ENCODE measurements at regions of chr2 and their contacts with region 1.

Region 1: DNA sequence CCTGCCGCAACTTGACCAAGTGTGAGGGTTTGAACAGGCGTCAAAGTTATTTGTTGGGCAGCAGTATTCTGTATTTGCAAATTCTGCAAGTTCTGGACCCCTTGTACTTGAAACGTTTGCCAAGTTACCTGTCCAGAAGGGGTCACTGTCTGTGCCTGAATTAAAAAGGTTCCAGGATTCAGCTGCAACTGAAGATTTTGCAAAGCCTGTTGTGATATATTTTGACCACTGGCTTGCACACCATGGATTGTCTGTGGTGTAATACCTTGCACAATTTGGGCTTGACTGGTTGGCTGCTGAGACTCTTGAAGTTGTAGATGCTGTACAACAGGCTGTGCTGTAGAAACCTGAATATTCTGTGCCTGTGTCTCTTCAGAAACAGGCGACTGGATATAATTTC is 10.2 kb downstream of the SP3 start:
- DNase-seq: no peak
- ATAC-seq: no peak
- H3K4me3 ChIP-seq: no peak overlapping the region
- H3K4me3 Mint-ChIP-seq: no peak overlapping the region
- H3K27ac ChIP-seq: no peak overlapping the region
- H3K27ac Mint-ChIP-seq: no peak overlapping the region
- H3K4me1 ChIP-seq: peaks cover 15 to 50% of the 10 kb centered on the region in 2 donors
- H3K4me1 Mint-ChIP-seq: peaks cover 82% of the 10 kb centered on the region
- H3K27me3 ChIP-seq: no peaks in the 10 kb centered on the region
- H3K27me3 Mint-ChIP-seq: no peaks in the 10 kb centered on the region
- CTCF ChIP-seq: no peak

Region 2: DNA sequence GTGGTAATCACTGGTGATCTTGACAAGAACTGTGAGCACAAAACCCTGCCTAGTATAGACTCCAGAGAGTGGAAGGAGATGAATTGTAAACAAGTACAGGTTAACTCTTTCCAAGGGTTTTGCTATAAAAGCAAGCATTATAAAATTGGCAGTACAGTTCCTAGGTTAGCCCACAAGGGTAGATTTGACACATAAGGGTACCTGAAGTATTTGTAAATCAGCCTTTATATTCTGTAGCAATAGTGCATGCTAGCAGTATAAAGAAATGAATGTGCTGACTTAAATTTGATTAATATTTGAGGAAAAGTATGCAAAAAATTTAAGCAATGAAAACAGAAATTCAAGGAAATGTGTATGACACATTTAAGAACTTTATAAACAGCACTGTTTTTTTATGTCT is 32.2 kb before region 1 on chr2:
- CTCF ChIA-PET with region 1: no interaction called
- POLR2A ChIA-PET with region 1: no interaction called
- intact Hi-C with region 1: loop called (anchors 5 kb)
- DNase-seq: no peak
- ATAC-seq: no peak
- H3K4me3 ChIP-seq: no peak overlapping the region
- H3K4me3 Mint-ChIP-seq: no peak overlapping the region
- H3K27ac ChIP-seq: no peak overlapping the region
- H3K27ac Mint-ChIP-seq: peak overlapping the region; percentile 8
- H3K4me1 ChIP-seq: peaks cover 11 to 15% of the 10 kb centered on the region in 2 donors
- H3K4me1 Mint-ChIP-seq: peaks cover 58% of the 10 kb centered on the region
- H3K27me3 ChIP-seq: no peaks in the 10 kb centered on the region
- H3K27me3 Mint-ChIP-seq: no peaks in the 10 kb centered on the region
- CTCF ChIP-seq: no peak

Region 3: GRCh38 chr2:173940208-173941020 is 14.6 kb before region 1 on chr2:
- CTCF ChIA-PET with region 1: interaction called, 3 read pairs
- POLR2A ChIA-PET with region 1: no interaction called
- intact Hi-C with region 1: loop called (anchors 2 kb)
- DNase-seq: no peak
- ATAC-seq: no peak
- H3K4me3 ChIP-seq: no peak overlapping the region
- H3K4me3 Mint-ChIP-seq: peak overlapping the region; percentile 72
- H3K27ac ChIP-seq: peak overlapping the region in 1 of 2 donors; percentile 49
- H3K27ac Mint-ChIP-seq: peak overlapping the region; percentile 70
- H3K4me1 ChIP-seq: peaks cover 45 to 71% of the 10 kb centered on the region in 2 donors
- H3K4me1 Mint-ChIP-seq: peaks cover 66% of the 10 kb centered on the region
- H3K27me3 ChIP-seq: no peaks in the 10 kb centered on the region
- H3K27me3 Mint-ChIP-seq: no peaks in the 10 kb centered on the region
- CTCF ChIP-seq: no peak

Measured in B cell (primary cell).